HepG2 (cell line): ENCODE measurements at regions of chr17 and their contacts with region 1.

Region 1: GRCh38 chr17:79970576-79971068 is 65.0 kb downstream of the TBC1D16 start:
- DNase-seq: peak; percentile 77
- ATAC-seq: peak; percentile 70
- H3K4me3 ChIP-seq: no peak overlapping the region
- H3K27ac ChIP-seq: no peak overlapping the region
- H3K4me1 ChIP-seq: 0 out of 2 replicates have a peak, but pooled peaks cover 5% of the 10 kb centered on the region
- H3K27me3 ChIP-seq: no peaks in the 10 kb centered on the region
- CTCF ChIP-seq: peak; percentile 80
- EP300 ChIP-seq: no peak
- POLR2A ChIP-seq: no peak
- RAD21 ChIP-seq: peak; percentile 83

Region 2: GRCh38 chr17:79504181-79504605 is 466.4 kb before region 1 on chr17:
- CTCF ChIA-PET with region 1: no interaction called
- POLR2A ChIA-PET with region 1: no interaction called
- in situ Hi-C with region 1: no loop called
- intact Hi-C with region 1: no loop called
- DNase-seq: no peak
- ATAC-seq: 0 out of 3 replicates have a peak, but pooled peaks have one; percentile 26
- H3K4me3 ChIP-seq: no peak overlapping the region
- H3K27ac ChIP-seq: no peak overlapping the region
- H3K4me1 ChIP-seq: no peaks in the 10 kb centered on the region
- H3K27me3 ChIP-seq: peaks cover 12 to 86% of the 10 kb centered on the region in 2 experiments
- CTCF ChIP-seq: no peak; the same call in 1 of the 2 replicates
- EP300 ChIP-seq: no peak
- POLR2A ChIP-seq: no peak
- RAD21 ChIP-seq: no peak

Region 3: GRCh38 chr17:79789534-79790353 is 180.9 kb before region 1 on chr17:
- CTCF ChIA-PET with region 1: interaction called, 14 read pairs
- POLR2A ChIA-PET with region 1: no interaction called
- in situ Hi-C with region 1: no loop called
- intact Hi-C with region 1: loop called (anchors 5 kb)
- DNase-seq: no peak
- ATAC-seq: peak; percentile 76
- H3K4me3 ChIP-seq: peak overlapping the region; percentile 22 to 67 (median 48); a peak in 4 of 6 replicates
- H3K27ac ChIP-seq: no peak overlapping the region
- H3K4me1 ChIP-seq: peaks cover 46% of the 10 kb centered on the region
- H3K27me3 ChIP-seq: peaks cover 18 to 48% of the 10 kb centered on the region in 2 experiments
- CTCF ChIP-seq: peak; percentile 83
- EP300 ChIP-seq: no peak
- POLR2A ChIP-seq: no peak
- RAD21 ChIP-seq: peak; percentile 98